K562 (cell line): ENCODE measurements at regions of chr19 and their contacts with region 1.

Region 1: GRCh38 chr19:44764975-44765948 is 12.4 kb upstream of the CBLC start:
- DNase-seq: no peak
- ATAC-seq: no peak
- H3K4me3 ChIP-seq: no peak overlapping the region
- H3K27ac ChIP-seq: no peak overlapping the region
- H3K4me1 ChIP-seq: peaks cover 0 to 9% of the 10 kb centered on the region in 2 experiments; a peak in 2 of 5 replicates
- H3K27me3 ChIP-seq: no peaks in the 10 kb centered on the region
- CTCF ChIP-seq: no peak
- EP300 ChIP-seq: no peak
- POLR2A ChIP-seq: no peak
- RAD21 ChIP-seq: no peak

Region 2: DNA sequence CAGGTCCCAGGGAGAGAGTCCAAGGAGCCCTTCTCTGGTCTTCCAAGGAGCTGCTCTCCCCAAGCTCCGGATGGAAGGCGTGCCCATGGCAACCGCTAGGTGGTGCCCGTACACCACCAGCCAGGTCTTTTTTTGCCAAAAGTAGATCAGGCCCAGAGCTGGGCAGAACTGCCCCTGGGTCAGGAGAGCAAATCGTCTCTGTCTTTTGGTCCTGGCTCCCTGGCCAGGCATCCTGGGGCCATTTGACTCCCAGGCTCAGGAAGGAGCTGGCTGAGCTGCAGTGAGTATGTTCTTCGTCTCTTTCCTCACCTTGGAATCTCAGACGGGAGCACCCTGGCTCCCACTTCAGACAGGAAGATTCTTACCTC is 41.3 kb before region 1 on chr19:
- CTCF ChIA-PET with region 1: interaction called, 34 read pairs
- POLR2A ChIA-PET with region 1: interaction called, 16 read pairs
- in situ Hi-C with region 1: loop called (anchors 5 kb)
- intact Hi-C with region 1: loop called (anchors 1 kb)
- DNase-seq: peak; percentile 83 to 88 (median 86)
- ATAC-seq: peak; percentile 94
- H3K4me3 ChIP-seq: no peak overlapping the region
- H3K27ac ChIP-seq: no peak overlapping the region
- H3K4me1 ChIP-seq: peaks cover 20 to 23% of the 10 kb centered on the region in 2 experiments
- H3K27me3 ChIP-seq: no peaks in the 10 kb centered on the region
- CTCF ChIP-seq: peak; percentile 94 to 98 (median 98)
- EP300 ChIP-seq: no peak
- POLR2A ChIP-seq: no peak
- RAD21 ChIP-seq: peak; percentile 98 to 99

Region 3: DNA sequence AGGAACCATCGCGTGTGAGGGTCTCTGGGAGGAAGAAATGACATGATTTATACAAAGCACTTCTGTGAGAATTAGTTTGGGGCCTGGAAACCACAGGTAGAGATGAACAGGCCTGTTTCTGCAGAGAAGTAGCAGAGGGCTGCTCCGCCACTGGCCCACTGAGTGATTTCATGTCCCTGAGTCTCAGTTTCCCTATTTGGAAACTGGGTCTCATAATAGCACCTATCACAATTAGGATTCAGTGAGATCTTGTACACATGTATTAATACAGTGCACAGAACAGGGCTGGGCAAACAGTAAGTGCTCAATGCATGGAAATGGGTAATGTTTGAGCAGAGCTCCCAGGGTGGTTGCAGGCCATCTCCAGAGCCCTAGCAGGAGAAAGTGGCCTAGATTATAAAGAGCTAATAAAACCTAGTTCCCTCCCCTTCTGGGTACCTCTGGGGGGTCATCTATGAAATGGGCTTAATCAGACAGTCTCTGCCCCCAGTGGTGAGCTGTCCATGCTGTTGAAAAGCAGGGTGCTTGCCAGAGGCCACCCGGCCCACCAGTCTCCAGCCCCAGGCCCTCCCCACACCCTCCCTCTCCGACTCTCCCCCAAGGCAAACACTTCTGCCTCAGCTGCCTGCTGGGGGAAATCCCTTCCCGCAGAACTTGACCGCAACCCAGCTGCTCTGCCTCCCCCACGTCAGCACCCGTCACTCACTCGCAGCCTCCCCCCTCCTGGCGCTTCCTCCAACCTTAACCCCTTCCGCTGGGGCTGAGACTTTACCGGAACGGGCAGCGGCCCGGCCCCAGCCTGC is 12.2 kb before region 1 on chr19:
- CTCF ChIA-PET with region 1: no interaction called
- POLR2A ChIA-PET with region 1: interaction called, 16 read pairs
- in situ Hi-C with region 1: no loop called
- intact Hi-C with region 1: no loop called
- DNase-seq: peak; percentile 86 to 94 (median 90)
- ATAC-seq: peak; percentile 88
- H3K4me3 ChIP-seq: peak overlapping the region; percentile 24; the same call in 1 of the 2 replicates
- H3K27ac ChIP-seq: peak overlapping the region; percentile 56; the same call in 1 of the 3 replicates
- H3K4me1 ChIP-seq: peaks cover 22 to 54% of the 10 kb centered on the region in 2 experiments
- H3K27me3 ChIP-seq: no peaks in the 10 kb centered on the region
- CTCF ChIP-seq: no peak; a peak in 1 of 6 replicates
- EP300 ChIP-seq: peak; percentile 90
- POLR2A ChIP-seq: 0 out of 2 replicates have a peak, but pooled peaks have one; percentile 13
- RAD21 ChIP-seq: peak in 1 of 2 experiments; percentile 11; a peak in 1 of 4 replicates